ENCODE measurements at regions of chr14 and their contacts with region 1.

Region 1: GRCh38 chr14:39456746-39457145 is 24.5 kb upstream of the FBXO33 start:
- DNase-seq: peak; percentile 47
- ATAC-seq: peak; percentile 94
- H3K4me3 ChIP-seq: no peak overlapping the region
- H3K27ac ChIP-seq: no peak overlapping the region
- H3K4me1 ChIP-seq: no peaks in the 10 kb centered on the region; the same call in 1 of the 2 replicates
- H3K27me3 ChIP-seq: 0 out of 2 replicates have a peak, but pooled peaks cover 4% of the 10 kb centered on the region
- CTCF ChIP-seq: no peak

Region 2: DNA sequence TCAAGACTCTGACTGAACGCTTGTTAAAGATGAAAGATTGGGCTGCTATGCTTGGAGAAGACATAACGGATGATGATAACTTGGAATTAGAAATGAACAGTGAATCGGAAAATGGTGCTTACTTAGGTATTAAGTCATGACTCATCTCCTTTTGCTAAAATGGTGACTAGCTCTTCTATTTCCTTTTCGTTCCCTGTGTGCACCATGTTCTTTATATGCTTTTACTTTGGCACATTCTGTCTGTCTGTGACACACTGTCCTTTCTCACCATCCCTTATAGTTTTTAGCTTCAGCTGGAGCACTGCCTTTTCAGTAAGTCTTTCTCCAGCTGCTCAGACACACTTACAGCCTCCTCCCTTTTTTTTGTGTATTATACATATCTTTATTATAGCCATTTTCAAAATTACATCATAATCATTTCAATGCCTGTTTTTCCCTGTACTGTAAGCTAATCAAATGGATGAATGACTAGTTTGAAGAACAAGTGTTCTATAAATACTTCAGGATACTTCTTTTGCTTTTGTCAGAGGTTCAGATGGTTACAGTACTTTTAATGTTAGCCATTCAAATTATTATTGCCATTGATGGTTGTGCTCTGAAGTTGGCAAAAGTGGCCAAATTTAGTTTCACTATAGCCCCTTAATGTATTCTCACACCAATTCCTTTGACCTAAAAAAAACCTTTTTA is 154.5 kb before region 1 on chr14:
- CTCF ChIA-PET with region 1: no interaction called
- POLR2A ChIA-PET with region 1: no interaction called
- intact Hi-C with region 1: no loop called
- DNase-seq: peak; percentile 3
- ATAC-seq: no peak; the same call in 1 of the 2 replicates
- H3K4me3 ChIP-seq: no peak overlapping the region
- H3K27ac ChIP-seq: no peak overlapping the region
- H3K4me1 ChIP-seq: no peaks in the 10 kb centered on the region; the same call in 1 of the 2 replicates
- H3K27me3 ChIP-seq: no peaks in the 10 kb centered on the region
- CTCF ChIP-seq: no peak

Region 3: DNA sequence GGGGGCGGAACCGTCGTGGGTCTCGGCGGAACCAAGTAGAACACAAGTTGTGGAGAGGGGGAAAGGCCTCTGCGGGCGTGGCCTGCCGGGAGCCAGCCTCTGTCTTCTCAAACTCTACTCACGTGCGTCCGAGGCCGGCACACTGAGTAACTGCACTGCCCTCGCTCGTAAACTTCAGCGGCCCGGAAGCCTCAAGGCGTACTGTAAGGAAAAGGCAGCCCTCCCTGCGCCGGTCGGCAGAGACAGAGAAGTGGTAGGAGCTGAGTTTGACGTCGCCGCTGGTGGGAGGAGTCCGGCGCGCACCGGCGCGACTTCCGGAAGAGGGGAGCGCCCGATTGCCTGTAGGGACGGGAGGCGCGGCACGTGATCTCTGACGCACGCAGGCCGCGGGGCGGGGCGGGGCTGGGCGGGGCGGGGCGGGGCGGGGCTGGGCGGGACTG is 24.5 kb before region 1 on chr14 and contains the start of gene FBXO33:
- CTCF ChIA-PET with region 1: no interaction called
- POLR2A ChIA-PET with region 1: no interaction called
- intact Hi-C with region 1: loop called (anchors 1 kb)
- DNase-seq: peak; percentile 92
- ATAC-seq: peak; percentile 80
- H3K4me3 ChIP-seq: peak within 1 kb of the TSS; percentile 95
- H3K27ac ChIP-seq: peak within 1 kb of the TSS; percentile 96
- H3K4me1 ChIP-seq: peaks cover 25% of the 10 kb centered on the region
- H3K27me3 ChIP-seq: no peaks in the 10 kb centered on the region
- CTCF ChIP-seq: no peak
- total RNA-seq, gene FBXO33: 21.9 and 26.9 TPM in 2 replicates

Region 4: GRCh38 chr14:39446131-39446744 is 10.5 kb before region 1 on chr14:
- CTCF ChIA-PET with region 1: no interaction called
- POLR2A ChIA-PET with region 1: no interaction called
- intact Hi-C with region 1: no loop called
- DNase-seq: no peak
- ATAC-seq: no peak
- H3K4me3 ChIP-seq: no peak overlapping the region
- H3K27ac ChIP-seq: no peak overlapping the region
- H3K4me1 ChIP-seq: no peaks in the 10 kb centered on the region
- H3K27me3 ChIP-seq: no peaks in the 10 kb centered on the region
- CTCF ChIP-seq: no peak

Region 5: GRCh38 chr14:39603942-39604341 is 147.2 kb after region 1 on chr14:
- CTCF ChIA-PET with region 1: no interaction called
- POLR2A ChIA-PET with region 1: no interaction called
- intact Hi-C with region 1: no loop called
- DNase-seq: no peak
- ATAC-seq: no peak
- H3K4me3 ChIP-seq: no peak overlapping the region
- H3K27ac ChIP-seq: no peak overlapping the region
- H3K4me1 ChIP-seq: no peaks in the 10 kb centered on the region
- H3K27me3 ChIP-seq: no peaks in the 10 kb centered on the region
- CTCF ChIP-seq: no peak

Measured in PC-3 (cell line).